ENCODE measurements at regions of chr3 and their contacts with region 1.

Region 1: GRCh38 chr3:108818404-108818803 is 4.2 kb upstream of the TRAT1 start:
- DNase-seq: peak; percentile 82
- H3K4me3 Mint-ChIP-seq: no peak overlapping the region
- H3K27ac Mint-ChIP-seq: peak overlapping the region; percentile 57
- H3K4me1 Mint-ChIP-seq: peaks cover 40% of the 10 kb centered on the region
- H3K27me3 Mint-ChIP-seq: no peaks in the 10 kb centered on the region

Region 2: DNA sequence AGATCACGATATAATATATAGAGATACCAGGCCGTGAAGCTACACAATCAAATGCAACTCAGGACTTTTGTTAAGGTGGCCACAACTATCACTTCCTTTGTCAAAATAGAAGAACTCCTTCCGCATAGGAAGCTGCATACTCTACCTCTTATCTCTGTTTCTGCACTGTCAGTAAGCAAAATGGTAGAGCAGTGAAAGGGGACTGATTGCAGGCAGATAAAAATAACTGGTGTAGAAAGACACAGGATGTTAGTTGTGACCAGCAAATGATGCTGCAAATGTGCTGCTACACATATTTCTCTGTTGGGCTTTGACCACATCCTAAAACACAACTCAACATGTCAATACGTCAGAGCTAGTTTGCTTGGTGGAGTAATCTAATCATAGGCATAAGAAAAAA is 12.1 kb before region 1 on chr3:
- CTCF ChIA-PET with region 1: interaction called, 17 read pairs
- POLR2A ChIA-PET with region 1: no interaction called
- DNase-seq: peak; percentile 74
- H3K4me3 Mint-ChIP-seq: peak overlapping the region; percentile 33
- H3K27ac Mint-ChIP-seq: peak overlapping the region; percentile 93
- H3K4me1 Mint-ChIP-seq: peaks cover 33% of the 10 kb centered on the region
- H3K27me3 Mint-ChIP-seq: no peaks in the 10 kb centered on the region

Region 3: DNA sequence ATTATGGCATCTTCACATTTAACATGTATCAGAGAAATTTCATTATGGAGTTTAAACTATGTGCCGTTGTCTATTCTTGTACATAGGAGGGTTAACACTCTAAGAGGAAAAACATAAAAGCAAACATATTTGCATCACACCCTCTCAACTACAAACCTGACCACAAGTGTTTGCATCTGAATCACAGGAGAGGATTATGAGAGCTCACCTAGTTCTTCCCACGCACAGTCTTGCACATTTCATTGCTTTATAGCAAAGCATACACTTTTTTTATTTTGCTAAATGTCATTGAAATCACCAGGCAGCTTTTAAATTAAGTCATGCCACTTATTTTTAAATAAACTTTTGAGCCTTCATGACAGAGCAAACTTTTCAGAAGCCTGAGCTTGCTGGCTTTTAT is 16.7 kb after region 1 on chr3:
- CTCF ChIA-PET with region 1: interaction called, 22 read pairs
- POLR2A ChIA-PET with region 1: interaction called, 3 read pairs
- DNase-seq: peak; percentile 57
- H3K4me3 Mint-ChIP-seq: peak overlapping the region; percentile 79
- H3K27ac Mint-ChIP-seq: peak overlapping the region; percentile 95
- H3K4me1 Mint-ChIP-seq: peaks cover 87% of the 10 kb centered on the region
- H3K27me3 Mint-ChIP-seq: no peaks in the 10 kb centered on the region

Measured in activated CD4-positive, alpha-beta T cell treated with anti-CD3 and anti-CD28 coated beads, Interleukin-2, amount 10 ng/mL, durations not matched to agents 7 days and 5 days (primary cell).